ENCODE measurements at regions of chr10 and their contacts with region 1.

Region 1: DNA sequence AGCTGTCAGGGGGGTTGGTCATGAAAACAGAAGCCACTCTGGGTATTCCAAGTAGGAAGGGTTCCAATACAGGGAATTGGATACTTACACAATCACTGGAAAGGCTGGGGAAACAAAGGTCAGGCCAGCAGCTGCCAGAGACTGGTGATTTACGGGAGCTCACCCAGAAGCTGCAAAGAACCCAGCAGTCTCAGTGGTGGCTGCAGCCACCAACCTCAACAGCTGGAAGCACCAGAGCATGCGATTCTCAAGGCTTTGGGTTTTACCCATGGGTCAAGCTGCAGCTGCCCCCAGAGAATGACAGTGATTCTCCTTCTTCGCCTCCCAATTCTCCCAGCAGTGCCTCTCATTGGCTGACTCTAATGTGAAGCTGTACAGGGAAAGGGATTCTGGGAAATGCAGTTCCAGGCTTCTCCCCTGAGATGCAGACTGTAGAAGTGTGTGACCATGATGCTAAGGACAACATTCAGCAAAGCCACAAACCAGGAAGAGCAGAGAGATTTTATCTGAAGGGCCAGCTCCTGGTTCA is 107.2 kb upstream of the TCF7L2 start:
- DNase-seq: peak; percentile 48 to 81 (median 61)
- ATAC-seq: peak; percentile 70 to 80 (median 76)
- H3K4me3 ChIP-seq: peak overlapping the region in 2 of 3 donors; percentile 27 to 38
- H3K27ac ChIP-seq: peak overlapping the region; percentile 12 to 96 (median 96)
- H3K4me1 ChIP-seq: peaks cover 0 to 36% (median 17%) of the 10 kb centered on the region in 4 donors
- H3K27me3 ChIP-seq: no peaks in the 10 kb centered on the region
- CTCF ChIP-seq: no peak
- POLR2A ChIP-seq: no peak

Region 2: DNA sequence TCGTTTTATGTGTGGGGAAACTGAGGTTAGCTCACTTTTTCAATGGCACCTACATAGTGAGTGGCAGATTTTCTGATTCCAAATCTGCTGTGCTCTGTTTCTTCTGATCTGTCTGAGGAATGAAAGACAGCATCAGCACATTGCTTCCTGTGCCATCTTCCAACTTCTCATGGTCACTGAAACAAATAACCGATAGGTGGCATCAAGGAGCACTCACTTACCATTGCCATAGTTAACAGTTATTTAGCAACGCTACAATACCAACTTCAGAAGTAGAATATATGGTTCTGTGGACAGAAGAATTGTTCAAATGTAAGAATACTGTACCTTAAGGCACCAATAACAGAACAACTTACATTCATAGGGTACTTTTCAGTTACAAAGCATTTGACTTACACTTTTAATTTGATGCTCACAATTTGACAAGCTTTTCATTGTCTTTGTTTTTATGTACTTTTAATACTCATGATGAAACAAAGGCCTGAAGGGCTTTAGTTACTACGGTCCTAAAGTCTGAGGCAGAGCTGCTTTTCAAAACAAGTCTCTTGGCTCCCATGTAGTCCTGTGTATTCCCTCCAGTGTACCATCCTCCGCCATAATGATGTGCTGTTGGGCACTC is 121.7 kb before region 1 on chr10:
- intact Hi-C with region 1: no loop called
- DNase-seq: no peak
- ATAC-seq: peak; percentile 66 to 81 (median 71)
- H3K4me3 ChIP-seq: no peak overlapping the region
- H3K27ac ChIP-seq: no peak overlapping the region
- H3K4me1 ChIP-seq: peaks cover 0 to 5% (median 2%) of the 10 kb centered on the region in 4 donors
- H3K27me3 ChIP-seq: no peaks in the 10 kb centered on the region
- CTCF ChIP-seq: peak; percentile 68 to 81 (median 76)
- POLR2A ChIP-seq: no peak

Region 3: DNA sequence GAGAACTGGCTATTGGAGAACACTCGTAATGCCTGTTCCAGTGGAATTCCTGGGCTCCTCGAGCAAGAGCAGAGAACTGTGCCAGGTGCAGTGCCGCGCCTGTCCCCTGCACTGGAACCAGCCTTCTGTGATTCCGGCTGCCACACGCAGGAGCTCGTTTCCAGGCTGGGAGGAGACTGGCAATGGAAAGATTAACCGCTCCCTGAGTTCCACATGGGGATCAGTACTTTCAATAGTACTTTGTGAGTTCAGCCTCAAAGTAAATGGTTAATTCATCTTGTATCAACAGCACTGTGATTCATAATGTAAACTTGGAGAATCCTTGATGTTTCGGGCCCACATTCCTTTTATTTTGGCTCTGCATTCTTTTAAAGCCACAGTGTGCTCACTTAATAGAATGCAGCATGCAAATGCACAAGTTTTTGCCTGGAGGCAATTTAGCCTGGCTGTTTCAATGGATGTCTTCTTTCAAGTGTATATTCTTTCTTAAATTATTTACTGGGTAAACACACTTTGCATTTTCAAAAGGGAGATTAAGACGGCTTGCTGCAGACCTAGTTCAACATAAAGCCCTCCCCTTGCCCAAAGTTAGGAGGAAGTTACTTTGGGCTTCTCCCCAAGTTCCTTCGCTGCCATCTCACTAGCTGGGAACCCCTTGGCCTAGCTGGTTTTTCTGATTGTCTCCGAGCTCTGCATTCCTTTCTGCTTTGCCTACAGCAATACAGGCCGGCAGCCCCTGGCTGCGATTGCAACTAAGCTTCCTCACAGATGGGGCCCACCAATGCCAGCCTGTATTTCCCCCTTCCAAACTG is 30.9 kb before region 1 on chr10:
- intact Hi-C with region 1: no loop called
- DNase-seq: peak in 2 of 3 donors; percentile 43 to 50
- ATAC-seq: peak in 2 of 4 donors; percentile 62 to 68
- H3K4me3 ChIP-seq: no peak overlapping the region
- H3K27ac ChIP-seq: peak overlapping the region in 1 of 3 donors; percentile 13
- H3K4me1 ChIP-seq: peaks cover 0 to 12% (median 8%) of the 10 kb centered on the region in 4 donors
- H3K27me3 ChIP-seq: no peaks in the 10 kb centered on the region
- CTCF ChIP-seq: no peak
- POLR2A ChIP-seq: no peak

Region 4: DNA sequence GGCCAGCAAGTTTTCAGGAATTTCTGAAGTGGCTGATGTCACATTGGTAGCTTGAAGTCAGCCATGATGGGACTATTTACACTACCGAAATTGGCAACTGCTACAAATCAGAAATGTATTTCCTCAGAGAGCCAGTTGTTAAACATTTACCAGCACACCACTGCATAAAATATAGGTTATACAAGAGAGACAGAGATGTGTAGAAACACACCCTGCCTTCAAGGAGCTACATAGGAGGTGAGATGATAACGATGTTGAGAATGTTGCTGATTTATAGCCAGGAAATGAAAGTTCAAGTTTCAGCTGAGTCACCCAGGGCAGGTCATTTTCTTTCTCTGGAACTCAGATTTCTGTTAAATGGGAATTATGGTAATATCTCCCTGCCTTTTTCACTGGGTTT is 61.1 kb after region 1 on chr10:
- intact Hi-C with region 1: loop called in 1 of 2 experiments (anchors 10 kb)
- DNase-seq: no peak
- ATAC-seq: peak in 2 of 4 donors; percentile 6
- H3K4me3 ChIP-seq: no peak overlapping the region
- H3K27ac ChIP-seq: no peak overlapping the region
- H3K4me1 ChIP-seq: peaks cover 0 to 8% (median 4%) of the 10 kb centered on the region in 4 donors
- H3K27me3 ChIP-seq: no peaks in the 10 kb centered on the region
- CTCF ChIP-seq: no peak
- POLR2A ChIP-seq: no peak

Measured in right lobe of liver (tissue), 6 donors.